MCF 10A (cell line): ENCODE measurements at regions of chr15 and their contacts with region 1.

Region 1: GRCh38 chr15:67142767-67143100 is 77.3 kb downstream of the SMAD3 start:
- DNase-seq: peak; percentile 67
- H3K4me3 Mint-ChIP-seq: no peak overlapping the region
- H3K27ac Mint-ChIP-seq: no peak overlapping the region
- H3K4me1 Mint-ChIP-seq: peaks cover 46% of the 10 kb centered on the region
- H3K27me3 Mint-ChIP-seq: no peaks in the 10 kb centered on the region
- CTCF ChIP-seq: no peak

Region 2: DNA sequence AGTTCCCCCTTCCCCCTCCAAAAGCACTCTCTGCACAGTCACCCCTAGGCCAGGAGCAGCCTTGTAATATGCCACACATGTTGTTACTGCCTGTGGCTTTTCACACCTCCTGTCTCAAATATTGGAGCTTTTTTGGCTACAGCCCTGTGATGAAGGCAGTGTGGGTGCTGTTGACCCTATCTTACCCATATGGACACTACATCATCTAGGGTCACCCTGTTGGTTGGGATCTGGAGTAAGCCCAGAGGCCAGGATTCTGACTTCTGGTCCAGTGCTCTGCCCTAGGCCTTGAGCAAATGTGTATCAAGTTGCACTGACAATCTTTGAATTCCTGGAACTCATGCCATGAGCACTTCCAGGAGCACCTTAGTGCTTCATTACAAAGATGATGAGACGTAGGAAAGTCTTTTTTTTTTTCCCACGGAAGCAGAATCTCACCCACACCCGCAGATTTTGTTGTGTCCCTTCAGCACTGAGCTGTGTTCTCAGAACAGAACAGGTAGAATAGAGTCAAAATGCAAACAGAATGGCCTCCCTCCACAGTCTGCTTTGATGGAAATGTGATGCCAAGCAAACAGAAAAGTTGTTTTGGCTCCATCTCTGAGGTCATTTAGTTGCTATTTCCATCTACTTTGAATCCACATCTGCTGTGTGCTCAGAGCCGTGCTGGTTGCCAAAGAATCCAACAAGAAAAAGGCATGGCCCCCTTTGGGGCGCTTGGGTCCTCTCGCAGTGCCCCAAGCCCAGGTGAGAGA is 27.7 kb before region 1 on chr15:
- CTCF ChIA-PET with region 1: no interaction called
- POLR2A ChIA-PET with region 1: no interaction called
- intact Hi-C with region 1: no loop called
- DNase-seq: no peak
- H3K4me3 Mint-ChIP-seq: no peak overlapping the region
- H3K27ac Mint-ChIP-seq: no peak overlapping the region
- H3K4me1 Mint-ChIP-seq: peaks cover 33% of the 10 kb centered on the region
- H3K27me3 Mint-ChIP-seq: no peaks in the 10 kb centered on the region
- CTCF ChIP-seq: no peak

Region 3: GRCh38 chr15:67127965-67128364 is 14.8 kb before region 1 on chr15:
- CTCF ChIA-PET with region 1: interaction called, 3 read pairs
- POLR2A ChIA-PET with region 1: interaction called, 39 read pairs
- intact Hi-C with region 1: loop called (anchors 2 kb)
- DNase-seq: peak; percentile 92
- H3K4me3 Mint-ChIP-seq: peak overlapping the region; percentile 57
- H3K27ac Mint-ChIP-seq: peak overlapping the region; percentile 81
- H3K4me1 Mint-ChIP-seq: peaks cover 46% of the 10 kb centered on the region
- H3K27me3 Mint-ChIP-seq: no peaks in the 10 kb centered on the region
- CTCF ChIP-seq: no peak